AG04449 (cell line): ENCODE measurements at regions of chr11 and their contacts with region 1.

Region 1: DNA sequence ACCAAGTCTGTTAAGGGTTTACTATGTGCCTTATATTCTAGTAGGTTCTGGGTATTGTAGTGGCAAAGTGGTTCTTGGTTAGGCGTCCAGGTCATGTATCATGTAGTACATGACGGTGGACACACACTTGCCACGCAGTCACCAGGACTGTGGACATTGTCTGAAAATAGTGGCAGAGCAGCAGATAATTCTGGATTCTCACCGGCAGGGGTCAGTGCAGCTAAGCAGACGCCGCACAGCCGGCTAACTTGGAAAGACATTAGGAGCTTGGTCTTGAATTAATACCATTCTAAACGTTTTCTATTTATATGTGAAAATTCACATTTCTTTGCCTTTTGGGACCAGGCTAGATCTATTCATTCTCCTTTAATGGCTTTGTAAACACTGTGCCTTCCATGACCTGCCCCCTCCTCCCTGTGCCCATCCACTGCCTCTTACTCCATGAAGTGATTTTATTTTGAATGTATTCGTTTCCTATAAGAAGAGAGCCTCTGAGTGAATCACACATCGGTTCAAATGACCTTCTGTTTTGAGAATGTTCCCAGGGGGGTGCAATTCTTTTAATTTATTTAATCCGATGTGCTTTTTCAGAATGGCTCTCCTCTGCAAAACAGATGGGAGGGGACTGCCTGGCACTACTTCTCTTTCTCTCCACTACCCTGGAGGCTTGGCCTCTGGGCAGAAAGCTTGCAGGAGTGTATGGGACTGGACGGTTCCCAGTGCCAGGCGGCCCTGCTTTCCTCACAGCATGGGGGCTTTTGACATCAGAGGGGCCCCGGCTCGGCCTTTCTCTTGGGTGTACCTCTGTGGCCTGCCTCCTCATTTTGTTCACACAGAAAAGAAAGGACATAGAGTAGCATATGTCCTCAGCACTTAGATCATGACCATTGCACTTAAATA is 378.0 kb downstream of the NTM start:
- DNase-seq: no peak
- H3K4me3 ChIP-seq: no peak overlapping the region; the same call in 1 of the 2 replicates
- CTCF ChIP-seq: peak; percentile 80

Region 2: GRCh38 chr11:131544591-131544990 is 203.8 kb before region 1 on chr11:
- CTCF ChIA-PET with region 1: no interaction called
- POLR2A ChIA-PET with region 1: no interaction called
- DNase-seq: no peak
- H3K4me3 ChIP-seq: no peak overlapping the region
- CTCF ChIP-seq: no peak

Region 3: DNA sequence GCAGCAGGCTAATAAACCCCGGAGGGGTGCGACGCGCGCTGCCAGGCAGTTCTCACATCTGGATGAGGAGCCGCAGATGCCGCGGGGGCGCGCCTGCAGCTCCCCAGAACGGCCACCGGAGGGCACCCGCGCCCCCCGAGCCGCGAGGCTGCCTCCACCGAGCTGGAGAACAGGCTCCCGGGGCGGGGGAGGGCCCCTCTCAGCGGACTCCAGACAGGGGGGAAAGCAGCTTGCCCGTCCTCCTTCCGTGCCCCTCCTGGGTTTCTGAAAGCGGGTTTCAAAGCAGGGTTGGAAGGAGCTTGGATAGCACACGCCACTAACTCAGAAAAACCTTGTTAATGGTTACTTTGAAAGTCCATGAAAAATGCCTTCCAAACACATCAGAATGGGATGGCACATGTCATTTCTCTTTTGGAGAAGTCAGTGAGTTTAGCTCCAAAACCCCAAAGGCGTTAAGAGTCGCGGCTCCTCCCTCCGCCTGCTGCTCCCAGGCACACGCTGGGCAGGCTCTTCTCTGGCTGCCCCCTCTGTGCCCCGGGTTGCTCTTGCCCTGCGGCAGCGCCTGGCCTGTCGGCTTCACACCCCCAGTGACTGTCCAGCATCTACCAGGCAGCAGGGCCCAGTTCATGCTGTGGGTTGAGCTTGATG is 60.2 kb before region 1 on chr11:
- CTCF ChIA-PET with region 1: interaction called, 83 read pairs
- POLR2A ChIA-PET with region 1: no interaction called
- DNase-seq: no peak
- H3K4me3 ChIP-seq: peak overlapping the region; percentile 43
- CTCF ChIP-seq: peak; percentile 96

Region 4: DNA sequence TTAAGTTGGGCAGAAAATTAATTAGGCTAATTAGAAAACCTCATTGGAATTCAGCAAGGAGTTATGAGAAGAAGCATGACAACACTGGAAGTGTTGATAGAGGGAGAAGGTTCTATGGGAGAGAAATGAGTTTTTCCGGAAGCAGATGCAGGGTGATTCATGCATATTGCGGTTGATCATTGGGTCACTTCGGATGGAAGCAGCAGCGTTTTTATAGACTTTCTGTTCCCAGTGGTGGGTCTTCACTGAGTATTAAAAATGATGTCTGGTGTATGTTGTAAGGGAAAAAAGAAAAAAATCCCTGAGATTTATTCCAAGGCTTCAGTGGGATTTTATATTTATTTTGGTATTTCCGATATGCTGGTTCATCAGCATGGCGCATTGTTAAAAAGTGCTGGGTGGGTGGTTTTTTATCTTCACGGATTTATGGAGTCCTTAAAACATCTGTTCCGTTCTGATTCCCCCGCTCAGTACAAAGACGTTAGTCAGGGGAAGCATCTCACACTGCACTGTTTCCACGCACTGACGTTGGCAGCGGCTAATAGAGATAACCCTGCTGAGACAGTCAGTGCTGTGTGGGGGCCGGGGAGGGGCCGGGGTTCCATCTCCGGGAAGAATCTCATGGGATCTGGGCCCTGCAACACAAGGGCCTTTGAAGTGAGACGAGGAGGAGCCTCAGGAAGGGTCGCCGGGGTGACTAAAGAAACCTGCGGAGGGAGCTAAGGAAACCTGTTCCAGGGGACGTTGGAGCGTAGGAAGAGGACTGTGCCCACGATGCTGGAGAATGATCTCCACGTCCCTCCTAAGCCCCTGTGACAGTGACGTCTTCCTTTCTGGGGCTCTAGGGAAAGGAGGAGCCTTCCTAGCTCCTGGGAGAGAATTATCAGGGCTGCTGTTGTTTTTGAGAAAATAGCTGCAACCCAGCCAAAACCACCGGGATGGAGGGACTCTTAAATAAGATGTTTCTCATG is 12.0 kb after region 1 on chr11:
- CTCF ChIA-PET with region 1: interaction called, 85 read pairs
- POLR2A ChIA-PET with region 1: interaction called, 5 read pairs
- DNase-seq: no peak
- H3K4me3 ChIP-seq: peak overlapping the region; percentile 27
- CTCF ChIP-seq: no peak

Region 5: GRCh38 chr11:131851964-131852755 is 103.8 kb after region 1 on chr11:
- CTCF ChIA-PET with region 1: interaction called, 12 read pairs
- POLR2A ChIA-PET with region 1: no interaction called
- DNase-seq: no peak
- H3K4me3 ChIP-seq: no peak overlapping the region
- CTCF ChIP-seq: no peak

Region 6: DNA sequence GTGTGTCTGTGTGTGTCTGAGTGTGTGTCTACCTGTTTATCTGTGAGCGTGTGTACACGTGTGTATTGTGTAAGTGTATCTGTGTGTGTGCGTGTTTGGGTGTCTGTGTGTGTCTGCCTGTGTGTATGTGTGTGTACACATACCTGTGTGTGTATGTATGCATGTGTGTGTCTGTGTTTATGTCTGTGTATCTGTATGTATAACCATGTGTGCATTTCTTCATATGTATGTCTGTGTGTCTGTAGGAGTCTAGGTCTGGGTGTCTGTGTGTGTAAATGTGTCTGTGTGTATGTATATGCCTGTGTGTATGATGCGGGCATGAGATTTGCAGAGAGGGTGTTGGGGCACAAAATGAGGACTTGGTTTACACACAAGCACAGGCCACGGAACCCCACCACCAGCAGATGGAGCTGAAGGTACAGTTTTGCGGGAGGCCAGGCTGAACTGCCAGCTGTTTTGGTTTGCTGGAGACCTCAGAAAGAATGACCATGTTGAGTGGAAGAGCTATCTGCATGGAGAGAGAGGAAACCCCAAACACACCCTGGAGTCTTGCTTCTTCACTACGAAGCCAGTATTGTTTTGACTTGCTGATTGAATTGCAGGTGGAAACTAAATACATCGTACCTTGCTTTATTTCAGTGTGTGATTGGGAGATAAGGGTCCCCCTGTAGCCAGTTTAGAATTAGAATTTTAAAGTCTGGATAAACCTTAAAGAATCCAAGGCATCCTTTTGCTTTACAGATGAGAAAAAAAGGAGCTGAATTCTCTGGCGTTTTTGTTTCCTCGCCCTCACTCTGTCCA is 119.3 kb after region 1 on chr11:
- CTCF ChIA-PET with region 1: interaction called, 51 read pairs
- POLR2A ChIA-PET with region 1: no interaction called
- DNase-seq: peak; percentile 47
- H3K4me3 ChIP-seq: no peak overlapping the region
- CTCF ChIP-seq: peak; percentile 90

Region 7: GRCh38 chr11:131910523-131911387 is 162.4 kb after region 1 on chr11:
- CTCF ChIA-PET with region 1: interaction called, 31 read pairs
- POLR2A ChIA-PET with region 1: interaction called, 3 read pairs
- DNase-seq: no peak
- H3K4me3 ChIP-seq: peak overlapping the region; percentile 82
- CTCF ChIP-seq: no peak